ENCODE measurements at regions of chr17 and their contacts with region 1.

Region 1: DNA sequence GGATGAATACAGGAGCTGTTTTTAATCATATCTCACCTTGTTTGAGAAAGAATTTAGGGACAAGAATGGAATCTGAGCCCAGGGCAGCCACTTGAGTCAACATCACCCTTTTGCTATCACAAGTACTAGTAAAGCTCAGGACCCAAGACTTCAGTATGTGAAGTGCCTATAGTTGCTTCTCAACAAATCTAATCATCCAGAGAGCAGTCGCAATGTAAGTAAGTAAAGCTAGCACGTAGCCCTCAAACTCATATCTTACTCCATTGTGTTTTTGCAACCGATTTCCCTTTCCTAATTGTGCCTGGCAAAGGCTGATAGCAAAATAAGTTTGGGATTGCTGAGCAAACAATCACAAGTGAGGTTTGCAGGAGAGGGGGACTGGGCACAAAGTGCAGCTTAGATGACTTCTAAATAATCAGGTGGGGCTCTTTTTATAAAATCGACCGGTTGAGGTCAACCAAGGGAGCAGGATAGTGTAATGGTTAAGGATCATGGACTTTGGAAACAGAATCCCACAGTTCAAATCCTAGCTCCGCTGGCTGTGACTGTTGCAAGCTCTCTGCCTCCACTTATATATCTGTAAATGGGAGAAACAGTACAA is 13.0 kb downstream of the TOB1 start:
- DNase-seq: no peak
- ATAC-seq: peak in 1 of 2 donors; percentile 44
- H3K4me3 ChIP-seq: no peak overlapping the region
- H3K27ac ChIP-seq: no peak overlapping the region
- H3K4me1 ChIP-seq: peaks cover 34% of the 10 kb centered on the region
- H3K27me3 ChIP-seq: no peaks in the 10 kb centered on the region
- CTCF ChIP-seq: no peak

Region 2: DNA sequence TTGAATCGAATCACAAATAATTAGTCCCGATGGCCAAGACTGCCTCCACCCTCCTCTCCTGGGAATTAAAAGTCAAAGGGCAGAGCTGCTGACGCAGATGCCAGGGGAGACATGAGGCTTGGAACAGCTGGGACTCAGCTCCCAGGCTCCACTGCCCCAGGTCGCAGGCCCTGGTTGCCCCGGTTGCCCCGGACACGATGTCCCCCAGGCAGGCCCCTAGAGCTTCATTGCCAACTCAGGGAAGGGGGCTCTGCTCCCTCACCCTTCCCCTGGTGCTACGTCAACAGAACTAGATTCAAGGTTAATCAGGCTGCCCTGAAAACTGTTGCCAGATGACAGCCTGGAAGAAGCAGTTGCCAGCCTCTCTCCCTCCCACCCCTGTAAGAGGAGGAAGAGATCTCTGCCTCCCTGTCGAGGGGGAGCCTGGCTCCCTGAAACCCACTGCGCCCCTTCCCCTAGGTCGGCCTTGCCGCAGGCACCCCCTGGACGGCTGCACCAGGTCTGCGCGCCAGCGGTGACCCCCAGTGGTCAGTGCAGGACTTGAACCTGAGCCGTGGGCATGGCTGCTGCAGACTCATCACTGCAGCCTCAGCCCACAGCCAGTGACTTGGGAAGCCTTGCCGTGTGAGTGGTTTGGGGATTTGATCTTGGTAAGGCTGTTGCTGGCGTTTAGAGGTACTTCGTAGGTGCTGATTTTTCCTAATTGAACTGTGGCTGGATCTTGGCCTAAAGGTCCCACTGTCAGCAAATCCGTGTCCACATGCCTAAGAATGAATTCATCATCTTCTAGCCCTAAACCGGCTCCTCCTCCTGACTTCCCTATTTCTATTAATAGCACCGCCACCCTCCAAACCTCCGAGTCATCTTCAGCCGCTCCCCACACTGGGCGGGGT is 97.1 kb after region 1 on chr17:
- intact Hi-C with region 1: loop called (anchors 5 kb)
- DNase-seq: peak; percentile 84
- ATAC-seq: peak; percentile 81 to 88
- H3K4me3 ChIP-seq: peak overlapping the region; percentile 17
- H3K27ac ChIP-seq: peak overlapping the region; percentile 83
- H3K4me1 ChIP-seq: peaks cover 46% of the 10 kb centered on the region
- H3K27me3 ChIP-seq: no peaks in the 10 kb centered on the region
- CTCF ChIP-seq: peak; percentile 84